ENCODE measurements at regions of chr9 and their contacts with region 1.

Region 1: GRCh38 chr9:89428901-89429890 is 68.7 kb downstream of the SEMA4D start:
- DNase-seq: peak; percentile 44 to 85 (median 60)
- ATAC-seq: peak; percentile 81
- H3K4me3 ChIP-seq: no peak overlapping the region
- H3K4me3 Mint-ChIP-seq: peak overlapping the region; percentile 63
- H3K27ac ChIP-seq: peak overlapping the region in 1 of 2 donors; percentile 67
- H3K27ac Mint-ChIP-seq: peak overlapping the region; percentile 96
- H3K4me1 ChIP-seq: peaks cover 100% of the 10 kb centered on the region
- H3K4me1 Mint-ChIP-seq: peaks cover 95% of the 10 kb centered on the region
- H3K27me3 ChIP-seq: no peaks in the 10 kb centered on the region
- H3K27me3 Mint-ChIP-seq: no peaks in the 10 kb centered on the region
- CTCF ChIP-seq: peak; percentile 58

Region 2: DNA sequence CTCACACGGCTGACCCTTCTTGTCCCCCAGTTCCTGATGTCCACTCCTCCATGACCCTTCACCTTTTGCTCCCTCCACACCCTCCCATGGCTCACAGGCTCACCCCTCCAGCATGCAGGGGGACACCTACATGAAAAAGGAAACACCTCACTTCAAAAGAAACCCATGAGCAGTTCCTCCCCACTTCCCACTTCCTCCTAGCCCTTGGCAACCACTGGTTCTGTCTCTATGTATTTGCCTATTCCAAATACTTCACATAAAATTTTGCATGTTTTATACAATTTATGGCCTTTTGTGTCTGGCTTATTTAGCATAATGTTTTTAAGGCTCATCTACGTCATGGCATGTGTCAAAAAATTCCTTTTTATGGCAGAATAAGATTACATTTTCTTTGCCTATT is 538.2 kb before region 1 on chr9:
- CTCF ChIA-PET with region 1: no interaction called
- POLR2A ChIA-PET with region 1: no interaction called
- intact Hi-C with region 1: no loop called
- DNase-seq: no peak
- ATAC-seq: no peak
- H3K4me3 ChIP-seq: no peak overlapping the region
- H3K4me3 Mint-ChIP-seq: no peak overlapping the region
- H3K27ac ChIP-seq: no peak overlapping the region
- H3K27ac Mint-ChIP-seq: no peak overlapping the region
- H3K4me1 ChIP-seq: peaks cover 4% of the 10 kb centered on the region
- H3K4me1 Mint-ChIP-seq: peaks cover 10% of the 10 kb centered on the region
- H3K27me3 ChIP-seq: peaks cover 6 to 12% of the 10 kb centered on the region in 2 experiments
- H3K27me3 Mint-ChIP-seq: peaks cover 39% of the 10 kb centered on the region
- CTCF ChIP-seq: no peak

Region 3: GRCh38 chr9:89410641-89411350 is 18.4 kb before region 1 on chr9:
- CTCF ChIA-PET with region 1: interaction called, 14 read pairs
- POLR2A ChIA-PET with region 1: interaction called, 6 read pairs
- intact Hi-C with region 1: no loop called
- DNase-seq: peak in 6 of 14 experiments; percentile 16 to 74 (median 52)
- ATAC-seq: peak; percentile 44
- H3K4me3 ChIP-seq: no peak overlapping the region
- H3K4me3 Mint-ChIP-seq: peak overlapping the region; percentile 49
- H3K27ac ChIP-seq: peak overlapping the region in 1 of 2 donors; percentile 46
- H3K27ac Mint-ChIP-seq: peak overlapping the region; percentile 87
- H3K4me1 ChIP-seq: peaks cover 96% of the 10 kb centered on the region
- H3K4me1 Mint-ChIP-seq: peaks cover 98% of the 10 kb centered on the region
- H3K27me3 ChIP-seq: no peaks in the 10 kb centered on the region
- H3K27me3 Mint-ChIP-seq: no peaks in the 10 kb centered on the region
- CTCF ChIP-seq: no peak

Region 4: DNA sequence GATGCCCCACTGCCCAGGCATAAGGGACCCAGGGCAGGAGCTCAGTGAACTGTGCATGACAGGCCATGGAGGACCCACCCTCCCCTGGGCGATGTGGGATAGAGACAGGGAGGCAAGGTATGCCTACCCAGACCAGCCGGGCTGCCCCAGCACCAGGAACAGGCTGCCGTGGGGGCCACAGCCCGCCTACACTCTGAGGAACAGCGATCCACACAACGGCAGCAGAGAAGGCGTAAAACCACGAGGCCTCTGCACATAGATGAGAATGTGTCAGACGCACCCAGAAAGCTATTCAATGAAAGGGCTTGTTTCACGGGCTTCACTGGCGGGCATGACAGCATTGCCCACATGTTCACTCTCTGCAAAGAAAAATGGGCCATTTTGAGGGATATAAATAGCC is 19.2 kb after region 1 on chr9:
- CTCF ChIA-PET with region 1: interaction called, 29 read pairs
- POLR2A ChIA-PET with region 1: interaction called, 9 read pairs
- intact Hi-C with region 1: no loop called
- DNase-seq: peak in 6 of 14 experiments; percentile 31 to 60 (median 50)
- ATAC-seq: peak; percentile 35
- H3K4me3 ChIP-seq: no peak overlapping the region
- H3K4me3 Mint-ChIP-seq: peak overlapping the region; percentile 67
- H3K27ac ChIP-seq: peak overlapping the region; percentile 40 to 68
- H3K27ac Mint-ChIP-seq: peak overlapping the region; percentile 96
- H3K4me1 ChIP-seq: peaks cover 88% of the 10 kb centered on the region
- H3K4me1 Mint-ChIP-seq: peaks cover 88% of the 10 kb centered on the region
- H3K27me3 ChIP-seq: no peaks in the 10 kb centered on the region
- H3K27me3 Mint-ChIP-seq: no peaks in the 10 kb centered on the region
- CTCF ChIP-seq: no peak

Region 5: DNA sequence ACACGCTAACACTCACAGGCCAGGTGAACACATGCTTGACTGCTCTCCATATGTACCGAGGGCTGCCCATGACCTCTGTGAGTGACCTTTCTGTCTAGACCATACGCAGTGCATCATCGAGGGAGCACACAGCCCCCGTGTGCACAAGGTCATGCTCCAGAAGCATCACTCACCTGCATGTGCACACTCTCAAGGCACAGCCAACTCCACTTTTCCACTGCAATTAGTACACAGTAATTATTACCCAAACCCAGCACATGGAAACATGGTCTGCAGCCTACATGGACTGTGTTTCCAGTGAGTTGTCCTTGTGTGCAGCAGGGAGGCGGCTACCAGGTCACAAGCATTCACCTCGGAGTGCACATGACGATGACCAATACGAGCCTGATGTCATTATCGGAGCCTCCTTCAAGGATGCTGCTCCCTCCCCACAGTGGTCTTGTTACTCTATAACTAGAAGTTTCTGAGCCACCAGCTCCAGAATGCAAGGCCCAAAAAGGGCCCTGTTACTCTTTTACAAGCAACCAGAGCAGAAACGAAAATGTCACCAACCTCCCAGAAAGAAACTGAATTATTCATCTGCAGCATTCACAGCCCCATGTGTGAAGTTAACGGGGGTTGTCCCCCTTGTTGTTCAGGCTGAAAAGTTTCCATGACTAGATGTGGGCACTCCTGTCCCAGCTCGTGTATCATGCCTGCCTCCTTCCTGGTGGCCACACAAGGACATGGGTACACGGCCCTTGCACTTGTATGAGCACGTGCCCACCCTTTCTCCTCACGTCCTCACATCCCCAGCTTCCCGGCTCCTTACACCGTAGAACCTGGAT is 37.5 kb after region 1 on chr9:
- CTCF ChIA-PET with region 1: interaction called, 25 read pairs
- POLR2A ChIA-PET with region 1: interaction called, 4 read pairs
- intact Hi-C with region 1: loop called in 1 of 2 experiments (anchors 5 kb)
- DNase-seq: peak in 2 of 14 experiments; percentile 43 to 52
- ATAC-seq: peak; percentile 2
- H3K4me3 ChIP-seq: peak overlapping the region; percentile 12
- H3K4me3 Mint-ChIP-seq: peak overlapping the region; percentile 76
- H3K27ac ChIP-seq: peak overlapping the region; percentile 64 to 84
- H3K27ac Mint-ChIP-seq: peak overlapping the region; percentile 96
- H3K4me1 ChIP-seq: peaks cover 93% of the 10 kb centered on the region
- H3K4me1 Mint-ChIP-seq: peaks cover 97% of the 10 kb centered on the region
- H3K27me3 ChIP-seq: no peaks in the 10 kb centered on the region
- H3K27me3 Mint-ChIP-seq: no peaks in the 10 kb centered on the region
- CTCF ChIP-seq: no peak

Region 6: GRCh38 chr9:89497978-89498851 is 69.0 kb after region 1 on chr9 and contains the start of gene SEMA4D:
- CTCF ChIA-PET with region 1: interaction called, 17 read pairs
- POLR2A ChIA-PET with region 1: interaction called, 3 read pairs
- intact Hi-C with region 1: no loop called
- DNase-seq: peak in 12 of 14 experiments; percentile 37 to 84 (median 58)
- ATAC-seq: peak; percentile 4
- H3K4me3 ChIP-seq: peak within 1 kb of the TSS; percentile 83
- H3K4me3 Mint-ChIP-seq: peak within 1 kb of the TSS; percentile 100
- H3K27ac ChIP-seq: peak within 1 kb of the TSS; percentile 60 to 68
- H3K27ac Mint-ChIP-seq: peak within 1 kb of the TSS; percentile 90
- H3K4me1 ChIP-seq: peaks cover 84% of the 10 kb centered on the region
- H3K4me1 Mint-ChIP-seq: peaks cover 92% of the 10 kb centered on the region
- H3K27me3 ChIP-seq: no peaks in the 10 kb centered on the region
- H3K27me3 Mint-ChIP-seq: no peaks in the 10 kb centered on the region
- CTCF ChIP-seq: no peak
- total RNA-seq, gene SEMA4D: 399 to 430 TPM

Region 7: DNA sequence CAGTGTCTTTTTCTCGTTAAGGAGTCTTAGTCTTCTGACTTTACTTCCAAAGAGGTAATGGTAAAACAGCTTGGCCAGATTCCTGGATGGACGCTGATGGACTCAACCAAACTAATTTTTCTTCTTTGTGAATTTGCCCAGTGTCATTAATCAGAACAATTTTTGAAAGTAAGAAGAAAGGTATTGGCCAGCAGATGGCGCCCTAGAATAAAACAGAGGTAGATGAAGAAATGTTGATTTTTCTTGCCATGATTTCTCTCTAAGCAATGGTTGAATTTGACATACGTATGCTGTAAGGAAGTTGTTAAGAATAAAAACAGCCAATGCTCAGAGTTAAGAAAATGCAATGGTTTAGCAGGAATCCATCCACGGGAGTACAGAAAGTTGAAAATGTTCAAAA is 713.4 kb after region 1 on chr9:
- CTCF ChIA-PET with region 1: no interaction called
- POLR2A ChIA-PET with region 1: no interaction called
- intact Hi-C with region 1: no loop called
- DNase-seq: peak; percentile 13 to 74 (median 50)
- ATAC-seq: no peak
- H3K4me3 ChIP-seq: no peak overlapping the region
- H3K4me3 Mint-ChIP-seq: no peak overlapping the region
- H3K27ac ChIP-seq: no peak overlapping the region
- H3K27ac Mint-ChIP-seq: no peak overlapping the region
- H3K4me1 ChIP-seq: no peaks in the 10 kb centered on the region
- H3K4me1 Mint-ChIP-seq: peaks cover 5% of the 10 kb centered on the region
- H3K27me3 ChIP-seq: peaks cover 4 to 7% of the 10 kb centered on the region in 2 experiments
- H3K27me3 Mint-ChIP-seq: peaks cover 36% of the 10 kb centered on the region
- CTCF ChIP-seq: peak; percentile 83